ENCODE measurements at regions of chr5 and their contacts with region 1.

Region 1: GRCh38 chr5:16477541-16477940 is 11.9 kb upstream of the ZNF622 start:
- DNase-seq: no peak
- H3K4me3 ChIP-seq: no peak overlapping the region
- H3K27ac ChIP-seq: no peak overlapping the region
- H3K4me1 ChIP-seq: no peaks in the 10 kb centered on the region
- H3K27me3 ChIP-seq: no peaks in the 10 kb centered on the region
- CTCF ChIP-seq: no peak

Region 2: GRCh38 chr5:16057277-16057676 is 420.3 kb before region 1 on chr5:
- intact Hi-C with region 1: no loop called
- DNase-seq: no peak
- H3K4me3 ChIP-seq: no peak overlapping the region
- H3K27ac ChIP-seq: no peak overlapping the region
- H3K4me1 ChIP-seq: no peaks in the 10 kb centered on the region
- H3K27me3 ChIP-seq: no peaks in the 10 kb centered on the region
- CTCF ChIP-seq: no peak

Region 3: GRCh38 chr5:16326137-16326536 is 151.4 kb before region 1 on chr5:
- intact Hi-C with region 1: no loop called
- DNase-seq: no peak
- H3K4me3 ChIP-seq: no peak overlapping the region
- H3K27ac ChIP-seq: no peak overlapping the region
- H3K4me1 ChIP-seq: no peaks in the 10 kb centered on the region
- H3K27me3 ChIP-seq: no peaks in the 10 kb centered on the region
- CTCF ChIP-seq: no peak

Region 4: DNA sequence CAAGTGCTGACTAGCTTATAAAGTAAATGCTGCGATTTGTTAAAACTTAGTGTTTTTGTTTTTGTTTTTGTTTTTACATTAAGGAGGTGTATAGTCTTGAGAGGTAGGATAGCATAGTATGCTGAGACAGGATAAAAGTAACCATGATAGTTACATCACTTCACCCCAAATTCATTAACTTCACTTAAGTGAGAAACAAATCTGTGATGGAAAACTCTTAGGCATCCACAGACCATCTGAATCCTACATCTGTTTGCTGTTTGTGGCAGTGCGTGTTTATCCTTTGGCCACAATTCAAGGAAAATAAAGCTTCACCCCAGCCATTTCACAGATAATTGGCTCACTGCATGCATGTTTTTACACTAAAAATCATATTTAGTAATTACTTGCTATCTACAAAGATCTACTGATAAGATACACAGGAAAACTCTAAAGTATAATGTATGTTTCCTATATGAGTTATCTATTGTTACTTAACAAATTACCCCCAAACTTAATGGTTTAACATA is 93.9 kb before region 1 on chr5:
- intact Hi-C with region 1: no loop called
- DNase-seq: no peak
- H3K4me3 ChIP-seq: no peak overlapping the region
- H3K27ac ChIP-seq: no peak overlapping the region
- H3K4me1 ChIP-seq: no peaks in the 10 kb centered on the region
- H3K27me3 ChIP-seq: no peaks in the 10 kb centered on the region
- CTCF ChIP-seq: no peak

Region 5: DNA sequence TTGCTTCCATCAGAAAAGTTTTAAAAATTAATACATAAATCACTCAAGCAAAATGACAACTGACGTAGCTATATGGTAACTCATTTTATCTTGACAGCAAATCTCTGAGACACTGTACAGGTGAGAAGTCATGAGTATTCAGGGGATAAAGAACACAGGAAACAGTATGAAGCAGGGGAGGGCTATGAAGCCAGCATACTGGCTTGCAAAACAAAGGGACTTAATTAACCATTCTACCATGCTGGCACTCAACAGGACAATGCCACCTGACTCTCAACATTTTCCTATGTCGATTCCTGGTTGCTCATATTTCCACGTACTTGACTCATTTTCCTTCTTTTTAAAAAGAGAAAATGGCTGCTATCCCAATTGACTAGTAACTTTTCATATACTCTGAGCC is 290.6 kb after region 1 on chr5:
- intact Hi-C with region 1: loop called (anchors 10 kb)
- DNase-seq: no peak
- H3K4me3 ChIP-seq: no peak overlapping the region
- H3K27ac ChIP-seq: no peak overlapping the region
- H3K4me1 ChIP-seq: no peaks in the 10 kb centered on the region
- H3K27me3 ChIP-seq: no peaks in the 10 kb centered on the region
- CTCF ChIP-seq: no peak